Colonic mucosa (tissue), 4 donors: ENCODE measurements at regions of chr17 and their contacts with region 1.

Region 1: GRCh38 chr17:57747221-57748017 is 2.3 kb upstream of the CCDC182 start:
- DNase-seq: peak; percentile 23
- H3K4me3 ChIP-seq: no peak overlapping the region
- H3K27ac ChIP-seq: no peak overlapping the region
- H3K4me1 ChIP-seq: no peaks in the 10 kb centered on the region
- H3K27me3 ChIP-seq: no peaks in the 10 kb centered on the region
- CTCF ChIP-seq: peak; percentile 72

Region 2: GRCh38 chr17:57243171-57243948 is 504.1 kb before region 1 on chr17:
- intact Hi-C with region 1: loop called (anchors 5 kb)
- DNase-seq: peak; percentile 72
- H3K4me3 ChIP-seq: no peak overlapping the region
- H3K27ac ChIP-seq: no peak overlapping the region
- H3K4me1 ChIP-seq: no peaks in the 10 kb centered on the region
- H3K27me3 ChIP-seq: no peaks in the 10 kb centered on the region
- CTCF ChIP-seq: peak; percentile 97

Region 3: DNA sequence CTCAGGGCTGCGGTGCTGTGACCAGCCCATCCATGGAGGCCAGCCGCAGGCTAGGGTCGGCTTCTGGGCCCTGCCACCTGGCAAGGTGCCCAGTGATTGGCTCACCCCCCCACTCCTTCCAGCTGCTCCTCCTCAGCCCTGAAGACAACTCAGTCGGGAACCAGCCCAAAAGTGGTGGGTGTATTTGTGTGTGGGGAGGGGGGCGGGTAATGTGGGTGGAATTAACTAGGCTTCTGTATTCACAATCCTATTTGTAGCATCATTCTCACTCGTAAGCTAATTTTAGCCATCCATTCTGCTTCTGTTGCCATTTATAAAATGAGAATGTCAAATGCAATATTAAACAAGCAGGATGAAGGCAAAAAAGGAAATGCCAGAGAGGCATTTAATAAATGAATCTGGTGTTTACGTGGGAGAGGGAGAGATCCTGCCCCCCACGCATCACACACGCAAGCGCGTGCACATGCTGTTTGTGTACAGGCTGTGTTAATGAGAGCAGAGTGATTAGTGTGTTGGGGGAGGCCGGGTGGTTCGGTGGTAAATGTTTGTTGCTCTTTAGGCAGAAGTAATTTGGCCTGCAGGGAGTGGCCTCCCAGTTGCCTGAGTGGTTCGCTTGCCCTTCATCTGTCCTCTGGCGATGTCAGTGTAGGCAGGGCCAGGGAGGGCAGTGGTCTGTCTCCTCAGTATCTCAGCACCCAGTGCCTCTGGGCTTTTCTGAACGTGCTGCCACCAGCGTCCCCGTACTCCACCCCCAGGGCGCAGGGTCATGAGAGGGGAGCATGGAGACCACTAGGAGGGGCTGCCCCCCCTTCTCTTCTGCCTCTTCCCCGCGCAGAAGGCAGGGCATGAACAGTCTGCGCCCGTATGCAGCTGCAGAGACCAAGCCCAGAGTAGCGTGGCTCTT is 142.4 kb before region 1 on chr17:
- intact Hi-C with region 1: loop called (anchors 10 kb)
- DNase-seq: peak; percentile 60
- H3K4me3 ChIP-seq: no peak overlapping the region
- H3K27ac ChIP-seq: peak overlapping the region; percentile 0
- H3K4me1 ChIP-seq: peaks cover 29% of the 10 kb centered on the region
- H3K27me3 ChIP-seq: no peaks in the 10 kb centered on the region
- CTCF ChIP-seq: no peak

Region 4: DNA sequence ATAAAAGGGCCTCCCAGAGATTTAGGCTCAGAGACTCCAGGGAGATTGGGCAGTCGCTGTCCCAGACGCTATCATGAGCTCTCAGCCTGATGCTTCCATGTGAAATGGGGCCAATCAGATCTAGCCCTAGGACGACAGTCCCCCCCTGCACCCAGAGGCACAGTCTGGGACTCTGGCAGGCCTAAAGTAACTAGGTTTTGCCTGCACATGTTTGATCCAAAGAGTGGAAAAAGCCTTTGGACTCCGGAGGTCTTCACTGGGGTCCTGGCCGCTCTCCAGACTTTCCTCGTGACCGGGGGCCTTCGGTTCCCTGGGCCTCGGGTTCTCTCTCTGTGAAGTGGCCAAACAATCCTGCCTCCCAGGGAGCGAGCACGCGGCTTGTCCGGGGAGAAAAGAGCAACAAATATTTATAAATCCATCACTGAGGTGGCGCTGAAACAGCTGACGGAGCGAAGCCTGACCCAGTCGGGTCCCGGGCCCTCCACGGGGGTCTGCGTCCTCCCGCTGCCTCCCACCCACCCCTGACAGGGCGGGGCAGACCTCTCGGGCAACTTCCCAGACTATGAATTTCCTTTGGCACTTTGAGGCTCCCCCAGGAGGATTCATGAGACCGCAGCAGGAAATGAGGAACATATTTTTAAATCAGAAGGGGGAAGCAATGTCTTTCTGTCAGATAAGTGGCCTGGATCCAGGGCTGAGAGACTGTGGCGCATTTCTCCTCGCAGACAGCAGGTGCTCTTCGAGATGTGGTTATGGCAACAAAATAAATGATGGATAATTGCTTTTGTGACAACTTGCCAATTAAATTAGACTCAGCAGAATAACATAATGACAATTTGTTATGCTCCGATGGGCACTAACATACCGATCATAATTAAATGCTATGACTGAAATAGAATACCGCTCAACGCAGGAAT is 63.6 kb after region 1 on chr17:
- intact Hi-C with region 1: no loop called
- DNase-seq: peak; percentile 20
- H3K4me3 ChIP-seq: no peak overlapping the region
- H3K27ac ChIP-seq: no peak overlapping the region
- H3K4me1 ChIP-seq: no peaks in the 10 kb centered on the region
- H3K27me3 ChIP-seq: no peaks in the 10 kb centered on the region
- CTCF ChIP-seq: no peak

Region 5: GRCh38 chr17:57879463-57880433 is 132.3 kb after region 1 on chr17:
- intact Hi-C with region 1: no loop called
- DNase-seq: no peak
- H3K4me3 ChIP-seq: no peak overlapping the region
- H3K27ac ChIP-seq: no peak overlapping the region
- H3K4me1 ChIP-seq: no peaks in the 10 kb centered on the region
- H3K27me3 ChIP-seq: no peaks in the 10 kb centered on the region
- CTCF ChIP-seq: no peak